ENCODE measurements at regions of chr7 and their contacts with region 1.

Region 1: GRCh38 chr7:150448789-150449147 is 1.7 kb upstream of the GIMAP8 start:
- DNase-seq: peak; percentile 82
- H3K4me3 Mint-ChIP-seq: peak overlapping the region; percentile 97
- H3K27ac Mint-ChIP-seq: peak overlapping the region; percentile 95
- H3K4me1 Mint-ChIP-seq: peaks cover 66% of the 10 kb centered on the region
- H3K27me3 Mint-ChIP-seq: no peaks in the 10 kb centered on the region

Region 2: GRCh38 chr7:149284850-149285626 is 1163.7 kb before region 1 on chr7:
- intact Hi-C with region 1: no loop called
- DNase-seq: peak; percentile 98
- H3K4me3 Mint-ChIP-seq: peak overlapping the region; percentile 94
- H3K27ac Mint-ChIP-seq: peak overlapping the region; percentile 52
- H3K4me1 Mint-ChIP-seq: peaks cover 33% of the 10 kb centered on the region
- H3K27me3 Mint-ChIP-seq: no peaks in the 10 kb centered on the region

Region 3: DNA sequence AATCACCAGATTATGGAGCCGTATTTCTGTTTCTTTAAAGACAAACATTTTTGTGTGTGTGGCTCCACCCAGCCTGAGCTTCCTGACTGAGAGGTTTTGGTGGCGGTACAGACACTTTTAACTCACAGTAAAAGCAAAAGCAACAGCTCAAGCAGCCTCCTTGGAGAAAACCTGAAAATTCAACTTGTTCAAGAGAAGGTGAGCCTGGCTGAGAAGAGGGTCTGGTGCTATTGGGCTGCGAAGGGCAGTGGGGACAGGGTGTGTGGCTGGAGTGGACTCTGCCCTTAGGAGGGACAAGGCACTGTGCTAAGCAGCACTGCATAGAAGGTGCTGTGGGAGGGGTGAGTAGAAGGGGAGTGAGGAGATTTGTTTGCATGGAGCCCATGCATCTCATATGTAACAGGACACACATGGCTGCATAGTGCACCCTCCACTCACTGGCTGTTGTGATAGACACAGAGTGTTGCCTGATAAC is 66.0 kb after region 1 on chr7 and contains the start of gene GIMAP7:
- intact Hi-C with region 1: loop called (anchors 1 kb)
- DNase-seq: peak; percentile 68
- H3K4me3 Mint-ChIP-seq: peak within 1 kb of the TSS; percentile 96
- H3K27ac Mint-ChIP-seq: peak within 1 kb of the TSS; percentile 98
- H3K4me1 Mint-ChIP-seq: peaks cover 65% of the 10 kb centered on the region
- H3K27me3 Mint-ChIP-seq: no peaks in the 10 kb centered on the region
- total RNA-seq, gene GIMAP7: 46.9 and 55.1 TPM in 2 replicates

Region 4: GRCh38 chr7:150620617-150621371 is 172.0 kb after region 1 on chr7:
- intact Hi-C with region 1: loop called (anchors 1 kb)
- DNase-seq: no peak
- H3K4me3 Mint-ChIP-seq: peak overlapping the region; percentile 57
- H3K27ac Mint-ChIP-seq: peak overlapping the region; percentile 86
- H3K4me1 Mint-ChIP-seq: peaks cover 63% of the 10 kb centered on the region
- H3K27me3 Mint-ChIP-seq: no peaks in the 10 kb centered on the region

Region 5: DNA sequence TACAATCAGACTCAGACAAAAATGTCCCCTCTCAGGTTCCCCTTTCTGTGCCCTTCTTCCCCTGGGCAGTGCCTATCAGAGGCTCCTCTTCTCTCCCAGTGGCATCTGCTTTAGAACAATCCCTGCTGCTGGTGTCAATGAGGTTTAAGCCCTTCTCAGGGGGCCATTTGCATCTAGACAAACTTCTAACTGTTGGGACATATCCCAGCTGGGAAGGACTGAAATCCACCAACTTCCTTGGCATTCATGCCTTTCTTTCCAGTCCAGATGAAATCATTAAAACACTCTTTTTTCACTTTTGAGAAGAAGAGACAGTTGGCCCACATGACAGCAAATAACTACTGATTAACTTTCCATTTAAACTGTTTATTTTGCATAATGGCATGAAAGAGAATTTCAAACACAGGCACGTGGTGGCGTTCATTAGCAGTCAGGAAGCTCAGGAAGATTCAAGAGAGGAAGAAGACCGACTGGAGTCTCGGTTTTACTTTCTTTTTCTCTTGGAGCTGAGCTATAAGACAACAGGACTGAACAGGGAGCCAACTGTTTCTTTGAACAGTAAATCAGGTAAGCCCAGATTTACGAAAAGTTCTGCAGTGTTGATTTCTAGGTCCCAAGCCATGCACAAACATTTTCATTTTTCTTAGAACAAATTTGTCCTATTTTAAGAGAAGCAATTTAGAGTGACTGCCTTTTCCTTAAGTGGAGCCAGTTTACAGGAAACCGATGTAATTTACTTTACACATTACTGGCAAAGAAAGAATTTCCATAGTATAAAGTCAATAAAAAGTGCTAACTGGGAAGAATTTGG is 236.7 kb after region 1 on chr7 and contains the start of gene GIMAP2:
- intact Hi-C with region 1: loop called (anchors 1 kb)
- DNase-seq: peak; percentile 39
- H3K4me3 Mint-ChIP-seq: peak within 1 kb of the TSS; percentile 93
- H3K27ac Mint-ChIP-seq: peak within 1 kb of the TSS; percentile 98
- H3K4me1 Mint-ChIP-seq: peaks cover 87% of the 10 kb centered on the region
- H3K27me3 Mint-ChIP-seq: no peaks in the 10 kb centered on the region
- total RNA-seq, gene GIMAP2: 24.7 and 29.7 TPM in 2 replicates

Region 6: DNA sequence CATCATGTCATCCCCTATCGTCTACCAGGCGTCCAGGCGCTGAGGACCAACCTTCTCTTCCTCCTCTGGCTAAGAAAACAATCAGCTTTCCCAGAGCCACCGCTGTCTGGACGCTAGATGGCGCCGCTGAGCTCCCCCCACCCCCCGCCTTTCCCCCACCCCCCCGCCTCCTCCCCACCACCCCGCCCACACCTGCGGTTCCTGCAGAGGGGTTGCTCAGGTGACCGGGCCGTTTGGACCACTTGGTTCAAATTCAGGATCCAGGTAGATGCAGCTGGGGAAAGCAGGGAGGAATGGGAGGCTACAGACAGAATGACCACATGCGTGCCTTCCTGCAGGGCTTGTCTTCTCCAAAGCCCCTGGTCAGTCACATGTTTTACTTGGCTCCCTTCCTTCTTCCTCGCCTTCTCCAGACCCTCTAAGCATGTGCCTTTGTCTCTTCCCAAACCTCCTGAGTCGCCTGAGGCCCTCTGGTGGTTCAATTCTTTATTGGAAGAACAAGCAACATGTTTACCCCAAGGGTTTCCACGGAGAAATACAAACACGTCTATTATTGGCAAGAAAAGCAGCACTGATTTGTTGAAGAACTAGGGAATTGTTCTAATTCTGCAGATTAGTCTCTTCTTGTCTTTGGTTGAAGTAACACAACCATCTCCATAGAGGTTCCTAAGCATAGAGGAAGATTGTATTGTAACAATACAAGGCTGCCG is 428.2 kb after region 1 on chr7:
- intact Hi-C with region 1: loop called (anchors 5 kb)
- DNase-seq: no peak
- H3K4me3 Mint-ChIP-seq: no peak overlapping the region
- H3K27ac Mint-ChIP-seq: no peak overlapping the region
- H3K4me1 Mint-ChIP-seq: no peaks in the 10 kb centered on the region
- H3K27me3 Mint-ChIP-seq: peaks cover 20% of the 10 kb centered on the region

Measured in activated T-helper 1 cell treated with anti-CD3 and anti-CD28 coated beads, Interleukin-12 subunit alpha, Interleukin-12 subunit beta, Interleukin-2, Interleukin-4 antibody, amounts not matched to agents 30 ng/mL and 10 ng/mL and 1 ng/mL, durations not matched to agents 14 hours and 24 hours and 36 hours (primary cell).